Head of caudate nucleus (tissue), 42 donors: ENCODE measurements at regions of chr14 and their contacts with region 1.

Region 1: DNA sequence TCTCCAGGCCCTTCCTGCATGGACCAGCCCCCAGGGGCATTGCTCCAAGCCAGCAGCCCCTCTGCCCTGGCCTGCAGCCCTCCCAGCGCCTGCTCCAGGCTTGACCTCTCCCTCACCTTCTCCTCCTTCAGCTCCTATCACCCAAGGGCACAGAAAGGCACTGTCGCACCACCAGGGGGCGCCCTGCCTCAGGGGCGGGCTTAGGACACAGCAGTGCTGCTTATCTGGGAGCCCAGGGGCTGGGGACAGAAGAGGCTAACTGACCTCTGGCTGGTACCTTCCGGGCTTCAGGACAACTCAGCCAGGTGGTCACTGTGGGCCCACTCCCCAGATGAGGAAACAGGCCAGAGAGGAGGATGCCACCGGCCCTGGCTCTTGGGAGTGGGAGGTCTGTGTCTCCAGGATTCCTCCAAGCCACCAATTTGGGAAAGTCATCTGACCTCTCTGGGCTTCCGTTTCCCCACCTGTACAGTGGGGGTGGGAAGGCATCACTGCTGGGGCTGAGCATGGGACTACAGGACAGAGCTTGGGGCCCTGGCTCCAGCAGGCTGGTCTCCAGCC is 25.3 kb upstream of the GPR132 start:
- DNase-seq: peak; percentile 58 to 93 (median 84)

Region 2: DNA sequence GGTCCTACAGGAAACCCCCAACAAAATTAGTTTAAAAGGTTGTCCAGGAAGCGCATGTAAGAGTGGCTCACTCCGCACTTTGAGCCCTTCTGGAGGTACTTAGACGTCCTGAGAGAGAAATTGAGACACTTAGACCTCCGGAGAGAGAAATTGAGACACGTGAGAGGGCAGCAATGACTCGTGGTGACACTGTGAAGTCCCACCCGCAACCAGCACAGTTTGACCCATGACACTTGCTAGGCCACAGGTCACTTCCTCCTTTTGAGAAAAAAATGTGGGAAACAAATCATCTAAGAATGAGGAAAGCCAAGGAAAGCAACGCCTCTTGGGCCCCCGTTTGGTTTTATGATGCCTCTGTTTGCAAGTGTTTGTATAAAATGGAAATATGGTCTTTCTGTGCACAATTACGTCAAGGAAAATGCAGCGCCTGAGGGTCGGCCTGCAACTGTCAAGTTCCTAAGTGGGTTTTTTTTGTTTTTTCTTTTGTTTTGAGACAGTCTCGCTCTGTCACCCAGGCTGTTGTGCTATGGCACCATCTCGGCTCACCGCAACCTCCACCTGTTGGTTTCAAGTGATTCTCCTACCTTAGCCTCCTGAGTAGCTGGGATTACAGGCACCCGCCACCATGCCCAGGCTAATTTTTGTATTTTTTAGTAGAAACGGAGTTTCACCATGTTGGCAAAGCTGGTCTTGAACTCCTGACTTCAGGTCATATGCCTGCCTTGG is 56.1 kb before region 1 on chr14:
- intact Hi-C with region 1: no loop called
- DNase-seq: no peak

Region 3: DNA sequence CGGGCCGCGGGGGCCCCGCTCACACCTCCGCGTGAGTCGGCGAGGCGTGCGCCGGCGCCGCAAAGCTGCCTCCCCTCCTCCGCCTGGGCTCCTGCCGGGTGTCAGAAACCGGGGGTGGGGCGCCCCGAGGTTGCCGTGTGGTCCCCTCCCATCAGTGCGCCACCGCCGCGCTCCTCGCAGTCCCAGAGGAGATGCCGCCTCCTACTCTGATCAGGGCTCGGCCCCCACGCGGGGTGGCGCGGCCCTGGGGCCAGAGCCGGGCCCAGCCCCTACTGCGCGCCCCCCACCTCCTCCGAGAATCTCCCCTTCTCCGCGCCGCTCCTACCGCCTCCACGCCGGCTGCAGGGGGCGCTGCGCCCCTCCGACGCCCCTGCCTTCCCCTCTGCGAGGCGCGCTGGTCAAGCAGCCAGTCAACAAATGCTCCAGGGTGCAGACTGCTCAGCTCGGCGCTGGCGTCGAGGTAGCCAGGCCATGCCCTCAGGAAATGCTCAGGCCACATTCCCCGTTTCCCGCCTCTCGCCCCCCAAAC is 78.5 kb after region 1 on chr14:
- intact Hi-C with region 1: loop called (anchors 5 kb)
- DNase-seq: peak in 30 of 42 donors; percentile 16 to 74 (median 54)

Region 4: DNA sequence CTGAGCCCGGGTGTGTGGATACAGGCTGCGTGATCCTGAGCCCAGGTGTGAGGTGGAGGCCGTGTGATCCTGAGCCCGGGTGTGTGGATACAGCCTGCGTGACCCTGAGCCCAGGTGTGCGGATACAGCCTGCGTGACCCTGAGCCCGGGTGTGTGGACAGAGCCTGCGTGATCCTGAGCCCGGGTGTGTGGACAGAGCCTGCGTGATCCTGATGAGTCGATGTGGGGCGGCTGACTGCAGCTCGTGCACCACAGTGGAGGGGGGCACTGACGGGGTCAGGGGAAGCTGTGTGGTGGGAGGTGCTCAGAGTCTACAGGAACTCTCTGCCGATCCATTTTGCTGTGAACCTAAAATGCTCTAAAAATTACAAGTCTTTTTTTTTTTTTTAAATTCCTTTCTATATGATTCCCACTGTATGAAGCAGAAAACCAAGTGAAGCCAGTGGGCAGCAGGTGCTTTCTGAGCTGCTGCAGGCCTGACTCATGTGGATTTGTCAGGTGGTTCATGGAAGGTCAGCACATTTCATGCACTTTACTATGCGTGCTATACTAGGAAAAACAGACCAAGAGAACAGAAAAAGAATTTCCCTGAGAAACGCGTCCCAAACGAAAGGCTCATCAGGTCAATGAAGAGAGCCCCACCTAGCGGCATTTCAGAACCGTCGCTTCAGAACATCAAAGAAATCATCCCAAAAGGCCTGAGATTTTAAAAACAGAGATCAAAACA is 191.0 kb after region 1 on chr14:
- intact Hi-C with region 1: loop called (anchors 10 kb)
- DNase-seq: peak in 30 of 42 donors; percentile 20 to 80 (median 60)